ENCODE measurements at regions of chr6 and their contacts with region 1.

Region 1: GRCh38 chr6:51855310-51856082 is 231.9 kb downstream of the PKHD1 start:
- DNase-seq: peak; percentile 11
- ATAC-seq: peak; percentile 96
- H3K4me3 ChIP-seq: no peak overlapping the region
- H3K27ac ChIP-seq: no peak overlapping the region
- H3K4me1 ChIP-seq: no peaks in the 10 kb centered on the region
- H3K27me3 ChIP-seq: no peaks in the 10 kb centered on the region
- CTCF ChIP-seq: peak; percentile 59 to 67 (median 61)
- EP300 ChIP-seq: no peak
- POLR2A ChIP-seq: no peak
- RAD21 ChIP-seq: peak; percentile 93

Region 2: DNA sequence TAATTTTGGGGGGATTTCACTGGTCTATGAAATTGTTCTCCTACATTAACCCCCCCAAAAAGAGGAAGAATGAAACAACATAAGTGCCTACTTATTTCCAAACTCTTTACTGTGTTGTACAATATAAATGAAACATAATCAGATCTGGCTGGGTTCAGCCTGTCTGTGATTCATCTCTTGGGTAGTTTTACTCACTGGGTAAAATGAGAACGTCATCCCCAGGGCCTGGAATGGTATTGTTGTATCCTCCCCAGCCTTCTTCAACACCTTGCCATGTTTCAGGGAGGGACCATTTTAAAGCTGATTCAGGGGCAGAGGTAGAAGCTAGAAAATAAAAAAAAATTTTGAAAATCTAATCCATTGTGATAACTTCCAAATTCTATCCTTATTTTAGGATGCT is 24.8 kb before region 1 on chr6:
- CTCF ChIA-PET with region 1: no interaction called
- POLR2A ChIA-PET with region 1: no interaction called
- RAD21 ChIA-PET with region 1: no interaction called
- SMC1A ChIA-PET with region 1: no interaction called
- in situ Hi-C with region 1: no loop called
- intact Hi-C with region 1: no loop called
- DNase-seq: no peak
- ATAC-seq: no peak
- H3K4me3 ChIP-seq: no peak overlapping the region
- H3K27ac ChIP-seq: no peak overlapping the region
- H3K4me1 ChIP-seq: no peaks in the 10 kb centered on the region
- H3K27me3 ChIP-seq: no peaks in the 10 kb centered on the region
- CTCF ChIP-seq: no peak
- EP300 ChIP-seq: no peak
- POLR2A ChIP-seq: no peak
- RAD21 ChIP-seq: no peak

Region 3: DNA sequence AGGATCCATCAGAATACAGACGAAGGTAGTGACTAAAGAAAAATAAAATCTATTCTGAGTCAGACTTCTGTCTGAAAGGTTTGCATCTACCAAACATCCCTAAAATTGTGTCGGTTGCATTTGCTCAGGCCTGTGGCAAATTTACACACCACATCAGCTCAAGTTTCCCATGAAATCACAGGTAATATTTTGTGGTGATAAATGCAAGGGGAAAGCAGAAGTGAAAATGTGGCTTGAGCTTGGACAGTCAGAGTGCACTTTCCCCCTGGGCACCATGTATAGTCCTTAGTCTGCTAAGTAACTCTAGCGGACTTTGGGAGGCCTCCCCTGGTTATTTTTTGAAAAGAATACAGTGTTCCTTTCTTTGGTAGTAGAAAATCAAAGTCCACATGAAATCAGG is 72.8 kb after region 1 on chr6:
- CTCF ChIA-PET with region 1: interaction called, 21 read pairs
- POLR2A ChIA-PET with region 1: no interaction called
- RAD21 ChIA-PET with region 1: interaction called, 4 read pairs
- SMC1A ChIA-PET with region 1: interaction called, 12 read pairs
- in situ Hi-C with region 1: no loop called
- intact Hi-C with region 1: no loop called
- DNase-seq: peak; percentile 40
- ATAC-seq: peak; percentile 86
- H3K4me3 ChIP-seq: no peak overlapping the region
- H3K27ac ChIP-seq: no peak overlapping the region
- H3K4me1 ChIP-seq: peaks cover 18% of the 10 kb centered on the region
- H3K27me3 ChIP-seq: no peaks in the 10 kb centered on the region
- CTCF ChIP-seq: no peak
- EP300 ChIP-seq: peak; percentile 63 to 71
- POLR2A ChIP-seq: no peak
- RAD21 ChIP-seq: no peak

Region 4: DNA sequence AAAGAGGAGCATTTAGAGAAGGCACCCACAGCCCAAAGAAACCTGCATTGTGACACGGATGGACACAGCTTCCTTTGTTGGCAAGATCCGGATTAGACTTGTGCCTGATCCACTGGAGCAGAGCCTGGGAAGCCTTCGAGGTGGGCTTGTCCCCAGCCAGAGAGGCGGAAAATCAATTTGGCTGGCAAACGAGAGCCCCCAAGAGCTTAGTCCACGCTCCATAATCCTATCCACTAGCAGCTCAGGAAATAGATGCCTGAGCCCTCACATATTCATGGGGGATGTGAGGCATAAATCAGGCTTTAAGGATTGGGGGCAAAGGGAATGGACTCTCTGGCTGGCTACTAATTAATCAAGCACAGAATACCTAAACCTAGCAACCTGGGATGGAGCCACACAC is 94.0 kb after region 1 on chr6:
- CTCF ChIA-PET with region 1: interaction called, 8 read pairs
- POLR2A ChIA-PET with region 1: no interaction called
- RAD21 ChIA-PET with region 1: interaction called, 13 read pairs
- SMC1A ChIA-PET with region 1: interaction called, 10 read pairs
- in situ Hi-C with region 1: no loop called
- intact Hi-C with region 1: no loop called
- DNase-seq: no peak
- ATAC-seq: no peak
- H3K4me3 ChIP-seq: no peak overlapping the region
- H3K27ac ChIP-seq: no peak overlapping the region
- H3K4me1 ChIP-seq: no peaks in the 10 kb centered on the region
- H3K27me3 ChIP-seq: no peaks in the 10 kb centered on the region
- CTCF ChIP-seq: no peak
- EP300 ChIP-seq: no peak
- POLR2A ChIP-seq: no peak
- RAD21 ChIP-seq: no peak

Region 5: GRCh38 chr6:52049252-52050050 is 194.0 kb after region 1 on chr6:
- CTCF ChIA-PET with region 1: interaction called, 11 read pairs
- POLR2A ChIA-PET with region 1: no interaction called
- RAD21 ChIA-PET with region 1: interaction called, 5 read pairs
- SMC1A ChIA-PET with region 1: no interaction called
- in situ Hi-C with region 1: no loop called
- intact Hi-C with region 1: no loop called
- DNase-seq: peak; percentile 11
- ATAC-seq: peak; percentile 75
- H3K4me3 ChIP-seq: no peak overlapping the region
- H3K27ac ChIP-seq: no peak overlapping the region
- H3K4me1 ChIP-seq: no peaks in the 10 kb centered on the region
- H3K27me3 ChIP-seq: peaks cover 0 to 8% of the 10 kb centered on the region in 2 experiments; a peak in 2 of 4 replicates
- CTCF ChIP-seq: peak; percentile 56 to 70 (median 62)
- EP300 ChIP-seq: no peak
- POLR2A ChIP-seq: no peak
- RAD21 ChIP-seq: peak; percentile 67